Activated CD4-positive, alpha-beta T cell treated with anti-CD3 and anti-CD28 coated beads, Interleukin-2, amount 10 ng/mL, durations not matched to agents 24 days and 14 days (primary cell): ENCODE measurements at regions of chr14 and their contacts with region 1.

Region 1: GRCh38 chr14:68466491-68467032 is 326.3 kb downstream of the ZFP36L1 start:
- DNase-seq: no peak
- H3K4me3 Mint-ChIP-seq: no peak overlapping the region
- H3K27ac Mint-ChIP-seq: no peak overlapping the region
- H3K4me1 Mint-ChIP-seq: peaks cover 27% of the 10 kb centered on the region
- H3K27me3 Mint-ChIP-seq: no peaks in the 10 kb centered on the region

Region 2: DNA sequence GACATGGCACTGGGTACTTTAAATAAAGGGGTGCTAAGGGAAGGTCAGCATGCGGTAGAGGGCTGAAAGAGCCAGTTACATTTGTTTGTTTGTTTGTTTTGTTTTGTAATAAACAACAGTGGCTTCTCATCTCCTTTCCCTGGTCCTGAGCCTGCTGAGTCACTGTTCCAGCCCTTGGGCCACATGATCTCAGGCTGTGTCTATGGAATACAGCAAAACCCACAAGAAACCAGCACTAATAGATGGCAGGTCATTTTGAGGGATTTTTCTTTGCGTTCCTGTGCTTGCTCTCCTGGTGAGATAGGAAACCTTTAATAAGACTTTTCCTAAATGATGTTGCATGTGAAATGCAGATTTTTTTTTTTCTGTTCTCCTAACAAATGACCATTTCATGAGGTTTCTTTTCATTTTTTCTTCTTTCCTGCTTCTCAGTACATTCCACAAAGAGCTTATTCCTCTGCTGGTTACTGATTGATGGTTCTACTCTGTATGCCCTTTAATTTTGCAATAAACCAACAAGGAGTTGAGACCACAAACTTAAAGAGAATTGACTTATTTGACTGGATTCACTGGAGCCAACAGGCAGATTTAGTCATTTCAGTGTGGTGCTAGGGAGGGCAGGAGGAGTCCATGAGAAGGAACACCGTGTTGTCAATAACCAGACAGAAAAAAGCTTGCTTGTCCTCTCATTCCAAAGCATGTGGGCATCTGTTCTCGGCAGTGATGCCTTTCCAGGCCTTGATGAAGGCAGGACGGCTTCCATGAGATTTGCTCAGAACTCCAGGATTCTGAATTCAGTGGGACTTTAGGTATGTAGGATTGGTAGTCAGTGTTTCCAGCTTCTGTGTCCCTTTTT is 187.8 kb before region 1 on chr14:
- intact Hi-C with region 1: no loop called
- DNase-seq: no peak
- H3K4me3 Mint-ChIP-seq: no peak overlapping the region
- H3K27ac Mint-ChIP-seq: no peak overlapping the region
- H3K4me1 Mint-ChIP-seq: peaks cover 45% of the 10 kb centered on the region
- H3K27me3 Mint-ChIP-seq: no peaks in the 10 kb centered on the region

Region 3: DNA sequence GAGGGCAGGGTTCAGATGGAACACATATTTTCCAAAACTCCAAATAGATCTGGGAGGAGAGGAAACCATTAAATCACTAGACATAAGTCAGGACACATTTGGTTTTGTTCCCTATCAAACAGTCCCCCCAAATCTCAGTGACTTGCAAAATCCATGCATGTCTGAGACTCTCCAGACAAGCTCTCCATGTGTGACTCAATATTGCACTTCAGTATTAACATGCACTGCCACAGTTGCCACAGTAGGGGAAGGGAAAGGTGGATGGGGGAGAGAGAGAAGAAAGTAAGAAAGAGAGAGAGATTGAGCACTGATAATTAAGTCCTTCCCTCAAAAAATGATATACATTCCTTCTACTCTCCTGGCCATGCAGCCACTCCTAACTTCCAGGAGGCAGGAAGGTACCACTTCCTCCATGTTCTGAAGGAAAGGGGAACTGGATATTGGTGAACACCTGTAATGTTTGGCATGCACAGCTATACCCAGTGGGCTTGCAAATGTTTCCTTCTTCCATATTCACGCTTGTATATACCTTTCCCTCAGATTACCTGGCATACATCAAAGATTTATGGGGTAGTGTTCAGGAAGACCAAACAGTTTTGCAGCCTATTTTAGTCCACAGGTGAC is 16.3 kb after region 1 on chr14:
- intact Hi-C with region 1: loop called (anchors 2 kb)
- DNase-seq: no peak
- H3K4me3 Mint-ChIP-seq: peak overlapping the region; percentile 5
- H3K27ac Mint-ChIP-seq: no peak overlapping the region
- H3K4me1 Mint-ChIP-seq: peaks cover 34% of the 10 kb centered on the region
- H3K27me3 Mint-ChIP-seq: no peaks in the 10 kb centered on the region